HEK293T (cell line): ENCODE measurements at regions of chr19 and their contacts with region 1.

Region 1: DNA sequence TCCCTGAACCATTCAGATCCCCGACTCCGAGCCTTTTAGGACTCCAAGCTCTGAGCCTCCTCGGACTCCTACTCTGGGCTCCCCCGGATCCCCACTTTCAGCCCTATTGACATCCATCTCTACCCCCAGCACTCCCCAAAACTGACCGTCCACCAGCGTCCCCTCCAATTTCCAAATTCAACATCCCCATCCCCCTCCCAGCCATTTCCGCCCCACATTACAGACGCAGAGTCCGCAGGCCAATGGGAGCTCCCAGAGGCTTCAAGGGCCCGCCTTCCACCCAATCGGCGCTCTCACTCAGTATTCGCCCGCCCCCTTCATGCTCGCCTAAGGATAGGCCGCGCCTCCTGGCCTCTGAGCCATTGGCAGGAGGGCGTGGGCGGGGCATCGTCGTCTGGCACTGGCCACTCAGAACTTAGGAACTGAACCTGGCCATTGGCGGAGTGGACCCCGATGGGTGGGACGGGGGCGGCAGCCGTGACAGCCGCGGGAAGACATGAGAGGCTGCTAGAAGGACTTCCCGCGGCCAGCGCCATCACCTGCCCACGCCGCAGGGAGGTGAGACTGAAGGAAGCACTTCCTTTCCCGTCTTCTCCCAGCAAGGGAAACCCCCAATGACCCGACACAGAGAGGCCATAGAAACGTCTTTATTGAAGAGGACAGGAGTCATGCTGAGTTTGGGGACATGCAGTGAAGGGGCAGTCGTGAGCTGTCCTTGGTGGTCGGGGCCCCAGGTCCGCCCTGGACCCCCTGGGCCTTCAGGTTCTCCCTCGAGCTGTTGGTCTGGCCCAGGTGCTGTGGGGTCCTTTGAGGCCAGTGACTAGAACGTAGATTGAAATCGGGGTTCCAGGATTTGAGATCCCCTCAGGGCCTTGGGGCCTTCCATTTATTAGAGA is at the start of gene ALKBH6:
- DNase-seq: peak; percentile 97

Region 2: DNA sequence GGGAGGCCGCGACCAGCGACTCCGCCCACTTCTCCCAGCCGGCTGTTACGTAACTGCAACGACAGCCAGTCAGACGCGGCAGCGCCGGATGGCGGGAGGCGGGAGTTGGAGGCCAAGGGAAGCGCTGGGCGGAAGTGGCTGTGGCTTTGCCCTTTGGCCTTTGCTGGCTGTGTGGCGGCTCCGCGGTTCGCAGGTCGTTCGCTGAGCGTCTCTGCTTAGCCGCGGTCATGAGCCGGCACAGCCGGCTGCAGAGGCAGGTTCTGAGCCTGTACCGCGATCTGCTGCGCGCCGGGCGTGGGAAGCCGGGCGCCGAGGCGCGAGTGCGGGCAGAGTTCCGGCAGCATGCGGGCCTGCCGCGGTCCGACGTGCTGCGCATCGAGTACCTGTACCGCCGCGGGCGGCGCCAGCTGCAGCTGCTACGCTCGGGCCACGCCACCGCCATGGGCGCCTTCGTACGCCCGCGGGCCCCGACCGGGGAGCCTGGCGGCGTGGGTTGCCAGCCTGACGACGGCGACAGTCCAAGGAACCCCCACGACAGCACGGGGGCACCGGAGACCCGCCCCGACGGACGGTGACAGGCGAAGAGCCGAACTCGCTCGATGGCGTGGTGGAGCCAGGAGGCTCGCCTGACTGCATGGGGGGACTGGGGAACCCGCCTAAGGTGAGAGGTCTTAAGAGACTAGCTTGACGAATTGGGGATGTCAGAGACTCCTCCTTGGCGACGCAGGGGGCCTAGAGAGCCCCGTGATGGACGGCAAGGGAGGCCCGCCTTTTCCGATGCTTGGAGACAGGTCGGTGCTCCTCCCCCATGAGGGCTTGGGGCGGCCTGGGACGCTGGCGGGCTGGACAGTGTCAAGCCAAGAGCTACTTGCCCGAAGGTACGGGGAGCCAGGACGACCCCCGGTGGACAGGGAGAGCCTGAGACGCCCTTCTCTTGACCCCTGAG is 19.0 kb before region 1 on chr19 and contains the start of gene SDHAF1:
- CTCF ChIA-PET with region 1: no interaction called
- POLR2A ChIA-PET with region 1: interaction called, 13 read pairs
- DNase-seq: peak; percentile 95

Region 3: DNA sequence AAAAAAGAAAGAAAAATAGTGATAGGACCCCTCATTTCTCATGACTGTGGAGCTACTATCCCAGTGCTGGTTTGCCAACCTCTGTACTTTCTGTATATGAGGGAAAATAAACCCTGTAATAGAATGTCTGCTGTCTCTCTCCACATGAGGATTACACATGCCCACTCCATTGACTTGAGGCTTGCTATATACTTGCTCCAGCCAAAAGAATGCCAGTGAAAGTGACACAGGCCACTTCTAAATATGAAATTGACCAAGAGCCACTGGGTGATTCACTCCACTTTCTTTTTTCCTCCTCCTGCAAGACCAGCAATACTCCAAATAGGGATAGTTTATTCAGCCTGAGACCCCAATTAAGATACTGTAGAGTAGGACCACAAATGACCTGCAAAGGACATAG is 33.6 kb after region 1 on chr19:
- CTCF ChIA-PET with region 1: no interaction called
- POLR2A ChIA-PET with region 1: no interaction called
- DNase-seq: no peak

Region 4: GRCh38 chr19:36114763-36115452 is 100.6 kb after region 1 on chr19 and contains the start of gene POLR2I:
- CTCF ChIA-PET with region 1: no interaction called
- POLR2A ChIA-PET with region 1: interaction called, 11 read pairs
- DNase-seq: peak; percentile 97